ENCODE measurements at regions of chr12 and their contacts with region 1.

Region 1: DNA sequence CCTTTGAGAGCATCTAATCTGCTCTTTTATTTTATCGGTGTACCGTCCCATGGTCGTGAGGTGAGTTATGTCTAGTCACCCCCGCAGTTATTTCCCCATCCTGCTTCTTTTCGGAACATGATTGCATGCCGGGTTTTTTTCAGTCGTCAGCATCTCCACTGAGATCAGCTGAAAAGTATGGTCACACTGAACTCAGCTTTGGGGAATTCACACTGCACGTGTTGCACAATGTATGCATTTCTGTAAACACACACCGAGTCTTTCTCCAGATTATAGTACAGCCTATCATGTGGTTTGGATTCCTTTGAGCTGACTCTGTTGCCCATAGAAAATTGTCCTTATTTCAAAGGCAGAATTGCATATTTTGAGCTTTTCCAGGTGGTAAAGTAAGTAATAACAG is 24.6 kb downstream of the PLXNC1 start:
- DNase-seq: no peak
- H3K4me3 ChIP-seq: peak overlapping the region; percentile 44
- H3K27ac ChIP-seq: no peak overlapping the region
- H3K4me1 ChIP-seq: peaks cover 40% of the 10 kb centered on the region
- CTCF ChIP-seq: no peak

Region 2: DNA sequence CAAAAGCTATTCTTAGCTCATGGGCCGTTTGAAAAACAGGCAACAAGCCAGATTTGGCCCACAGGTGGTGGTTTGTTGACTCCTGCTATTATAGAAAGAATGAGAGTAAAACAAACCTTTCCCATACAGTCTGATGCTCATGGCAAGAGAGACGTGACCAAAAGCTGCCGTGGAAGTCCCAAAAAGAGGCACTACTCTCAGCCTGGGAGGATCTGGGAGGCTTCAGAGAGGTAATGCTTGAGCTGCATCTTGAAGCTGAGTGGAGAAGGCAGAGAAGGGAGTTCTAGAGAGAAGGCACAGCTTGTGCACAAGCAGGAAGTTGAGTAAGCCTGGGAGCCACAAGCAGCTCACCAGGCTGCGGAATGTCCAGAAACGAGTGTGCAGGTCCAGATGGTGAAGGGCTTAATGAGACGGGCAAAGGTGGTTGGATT is 15.0 kb before region 1 on chr12:
- CTCF ChIA-PET with region 1: no interaction called
- POLR2A ChIA-PET with region 1: interaction called, 17 read pairs
- intact Hi-C with region 1: no loop called
- DNase-seq: peak; percentile 53
- H3K4me3 ChIP-seq: no peak overlapping the region
- H3K27ac ChIP-seq: no peak overlapping the region
- H3K4me1 ChIP-seq: peaks cover 19% of the 10 kb centered on the region
- CTCF ChIP-seq: no peak

Region 3: GRCh38 chr12:94187361-94187760 is 14.4 kb after region 1 on chr12:
- CTCF ChIA-PET with region 1: interaction called, 4 read pairs
- POLR2A ChIA-PET with region 1: interaction called, 21 read pairs
- intact Hi-C with region 1: no loop called
- DNase-seq: no peak
- H3K4me3 ChIP-seq: no peak overlapping the region
- H3K27ac ChIP-seq: no peak overlapping the region
- H3K4me1 ChIP-seq: no peaks in the 10 kb centered on the region
- CTCF ChIP-seq: no peak

Region 4: DNA sequence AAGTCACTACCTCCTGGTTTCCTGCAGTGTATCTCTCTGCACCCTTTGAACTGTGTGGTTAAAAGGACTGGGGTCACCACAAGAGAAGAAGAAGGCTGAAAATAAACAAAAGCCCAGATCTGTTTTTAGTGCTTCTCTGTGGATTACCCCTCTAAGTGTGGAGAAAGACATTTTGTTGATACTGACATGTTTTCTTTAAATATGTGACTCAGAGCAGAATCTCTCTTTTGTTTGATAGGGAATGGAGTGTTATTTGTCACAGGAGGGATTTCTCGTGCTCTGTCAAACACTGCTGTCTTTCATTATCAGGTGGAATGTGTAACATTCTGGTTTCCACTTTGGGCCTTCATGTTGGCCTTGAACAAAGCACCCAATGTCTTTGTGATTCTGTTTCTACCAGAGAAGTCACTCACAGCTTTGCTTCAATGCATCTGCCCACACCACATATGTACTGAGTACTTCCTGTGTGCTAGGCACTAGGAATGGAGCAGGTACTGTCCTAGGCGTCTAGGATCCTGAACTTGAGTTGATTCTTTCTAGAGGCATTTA is 57.5 kb after region 1 on chr12:
- CTCF ChIA-PET with region 1: no interaction called
- POLR2A ChIA-PET with region 1: no interaction called
- intact Hi-C with region 1: no loop called
- DNase-seq: peak; percentile 33
- H3K4me3 ChIP-seq: no peak overlapping the region
- H3K27ac ChIP-seq: no peak overlapping the region
- H3K4me1 ChIP-seq: peaks cover 20% of the 10 kb centered on the region
- CTCF ChIP-seq: no peak

Region 5: GRCh38 chr12:94244165-94245133 is 71.5 kb after region 1 on chr12:
- CTCF ChIA-PET with region 1: no interaction called
- POLR2A ChIA-PET with region 1: interaction called, 3 read pairs
- intact Hi-C with region 1: loop called (anchors 5 kb)
- DNase-seq: peak; percentile 51
- H3K4me3 ChIP-seq: no peak overlapping the region
- H3K27ac ChIP-seq: no peak overlapping the region
- H3K4me1 ChIP-seq: peaks cover 52% of the 10 kb centered on the region
- CTCF ChIP-seq: no peak

Measured in OCI-LY7 (cell line).